ENCODE measurements at regions of chr9 and their contacts with region 1.

Region 1: GRCh38 chr9:27590651-27591050 is 17.4 kb upstream of the C9orf72 start:
- DNase-seq: no peak
- ATAC-seq: no peak
- H3K4me3 ChIP-seq: no peak overlapping the region
- H3K27ac ChIP-seq: peak overlapping the region in 1 of 10 donors; percentile 77
- H3K4me1 ChIP-seq: peaks cover 0 to 13% (median 0%) of the 10 kb centered on the region in 9 donors
- H3K27me3 ChIP-seq: peaks cover 0 to 13% (median 0%) of the 10 kb centered on the region in 7 donors
- CTCF ChIP-seq: no peak

Region 2: GRCh38 chr9:27634879-27635278 is 44.2 kb after region 1 on chr9:
- intact Hi-C with region 1: loop called in 1 of 10 experiments (anchors 5 kb)
- DNase-seq: no peak
- ATAC-seq: no peak
- H3K4me3 ChIP-seq: no peak overlapping the region
- H3K27ac ChIP-seq: no peak overlapping the region
- H3K4me1 ChIP-seq: peaks cover 0 to 11% (median 0%) of the 10 kb centered on the region in 9 donors
- H3K27me3 ChIP-seq: peaks cover 0 to 9% (median 0%) of the 10 kb centered on the region in 7 donors
- CTCF ChIP-seq: no peak